Heart right ventricle (tissue), 16 donors: ENCODE measurements at regions of chr11 and their contacts with region 1.

Region 1: DNA sequence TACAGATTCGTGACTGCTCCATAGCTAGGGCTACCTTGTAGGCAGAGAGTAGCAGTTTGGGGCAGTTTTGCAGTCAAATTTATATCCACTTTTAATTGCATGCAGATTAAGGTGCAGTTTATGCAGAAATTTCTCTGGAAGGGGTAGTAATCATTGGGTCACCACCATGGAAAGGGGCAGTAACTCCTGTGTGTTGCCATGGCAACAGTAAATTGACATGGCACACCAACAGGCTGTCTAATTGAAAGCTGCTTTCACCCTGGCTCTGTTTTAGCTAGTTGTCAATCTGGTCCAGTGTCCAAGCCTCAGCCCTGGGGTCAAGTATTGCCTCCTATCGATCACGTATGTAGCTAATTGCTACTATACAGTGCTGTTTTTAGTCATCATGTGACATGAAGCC is 786.1 kb upstream of the CNTN5 start:
- DNase-seq: no peak
- ATAC-seq: no peak
- H3K4me3 ChIP-seq: no peak overlapping the region
- H3K27ac ChIP-seq: no peak overlapping the region
- H3K4me1 ChIP-seq: no peaks in the 10 kb centered on the region
- H3K27me3 ChIP-seq: no peaks in the 10 kb centered on the region
- CTCF ChIP-seq: no peak

Region 2: GRCh38 chr11:98040061-98040808 is 194.5 kb before region 1 on chr11:
- intact Hi-C with region 1: no loop called
- DNase-seq: no peak
- ATAC-seq: no peak
- H3K4me3 ChIP-seq: no peak overlapping the region
- H3K27ac ChIP-seq: no peak overlapping the region
- H3K4me1 ChIP-seq: peaks cover 0 to 3% (median 0%) of the 10 kb centered on the region in 9 donors
- H3K27me3 ChIP-seq: no peaks in the 10 kb centered on the region
- CTCF ChIP-seq: no peak

Region 3: DNA sequence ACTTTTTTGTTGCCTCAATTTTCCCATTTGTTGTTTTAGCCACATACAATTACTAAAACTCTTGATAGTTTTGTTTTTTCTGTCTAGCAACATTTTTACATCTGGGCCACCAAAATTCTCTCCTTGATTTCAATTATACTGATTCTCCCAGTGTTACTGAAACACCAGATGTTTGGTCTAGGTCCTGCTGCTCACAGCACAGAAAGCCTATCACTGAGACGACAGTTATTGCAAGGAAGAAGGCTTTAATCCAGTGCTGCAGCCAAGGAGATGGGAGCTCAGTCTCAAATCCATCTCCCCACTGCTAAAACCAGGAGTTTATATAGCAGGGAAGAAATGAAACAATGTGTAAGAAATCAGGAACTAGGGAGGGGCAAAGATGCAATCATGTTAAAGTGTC is 51.7 kb before region 1 on chr11:
- intact Hi-C with region 1: loop called in 1 of 10 experiments (anchors 10 kb)
- DNase-seq: no peak
- ATAC-seq: no peak
- H3K4me3 ChIP-seq: no peak overlapping the region
- H3K27ac ChIP-seq: no peak overlapping the region
- H3K4me1 ChIP-seq: no peaks in the 10 kb centered on the region
- H3K27me3 ChIP-seq: no peaks in the 10 kb centered on the region
- CTCF ChIP-seq: no peak